Right ventricle myocardium superior (tissue), 1 donor: ENCODE measurements at regions of chr11 and their contacts with region 1.

Region 1: DNA sequence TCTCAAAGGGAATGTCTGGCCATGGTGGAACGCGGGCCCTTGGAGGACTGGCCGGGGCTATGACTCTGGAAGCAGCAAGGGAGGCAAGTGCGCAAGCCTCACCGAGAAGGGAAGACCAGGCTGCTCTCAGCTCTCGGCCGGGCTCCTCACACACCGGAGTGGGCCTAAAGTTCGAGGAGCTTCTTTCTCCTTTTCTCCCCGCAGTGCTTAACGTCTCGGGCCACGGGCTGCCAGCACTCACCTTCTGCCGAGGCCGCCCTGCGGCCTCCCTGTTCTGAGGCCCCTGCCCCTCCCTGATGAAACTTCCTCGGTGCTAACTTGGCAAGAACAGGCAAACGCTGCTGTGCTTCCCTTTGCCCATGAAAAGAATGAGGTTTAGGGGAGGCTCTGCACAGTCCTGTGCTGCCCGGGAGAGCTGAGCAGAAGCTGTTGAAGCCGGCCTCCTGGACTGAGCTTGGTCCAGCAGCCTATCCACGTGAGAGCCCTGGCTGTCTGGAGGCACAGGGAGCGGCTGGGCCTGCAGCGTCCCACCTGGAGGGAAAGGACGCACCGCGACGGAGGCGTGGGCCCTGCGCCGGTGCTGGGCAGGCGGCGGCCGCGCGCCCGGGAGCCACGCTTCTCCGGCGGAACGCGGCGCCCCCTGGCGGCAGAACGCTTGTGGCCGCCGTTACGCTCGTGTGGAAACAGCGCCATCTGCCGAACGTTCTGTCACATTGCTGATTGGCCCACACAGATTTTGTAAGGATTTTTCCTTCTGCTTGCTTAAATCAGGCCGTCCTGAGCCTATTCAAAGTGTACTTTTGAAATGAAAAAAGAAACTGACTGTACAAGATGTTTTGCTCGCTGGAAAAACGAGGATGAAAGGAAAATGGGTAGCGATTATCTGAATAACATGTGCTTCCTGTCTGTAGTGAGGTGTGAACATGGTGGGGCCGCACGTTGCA is 65.0 kb upstream of the TMEM45B start:
- DNase-seq: peak; percentile 83
- ATAC-seq: peak; percentile 96

Region 2: DNA sequence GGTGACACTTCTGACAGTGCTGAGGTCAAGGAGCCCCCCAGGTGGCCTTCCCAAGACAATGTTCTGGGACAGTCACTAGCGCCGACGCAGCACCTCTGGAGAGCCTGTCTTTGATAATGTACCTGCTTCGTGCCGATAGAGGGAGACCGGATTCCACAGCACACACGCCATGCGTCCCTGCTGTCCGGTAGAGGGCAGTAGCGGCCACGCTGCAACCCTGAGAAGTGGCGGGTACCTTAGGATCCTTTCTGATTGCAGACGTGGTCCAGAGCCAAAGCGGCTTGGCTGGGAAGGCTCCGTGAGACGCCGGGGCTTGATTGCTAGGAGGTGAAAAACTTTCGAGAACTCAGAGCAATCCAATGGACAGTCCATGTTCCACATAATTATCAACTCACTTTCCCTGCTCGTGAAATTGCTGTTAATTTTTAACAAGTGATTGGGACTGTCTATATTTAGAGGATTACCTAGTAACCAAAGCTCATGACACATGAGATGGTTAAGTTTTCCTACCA is 386.4 kb before region 1 on chr11:
- intact Hi-C with region 1: loop called (anchors 10 kb)
- DNase-seq: peak; percentile 81
- ATAC-seq: peak; percentile 97

Region 3: GRCh38 chr11:130166457-130166784 is 415.8 kb after region 1 on chr11:
- intact Hi-C with region 1: no loop called
- DNase-seq: no peak
- ATAC-seq: peak; percentile 14